HAP-1 (cell line): ENCODE measurements at regions of chr5 and their contacts with region 1.

Region 1: DNA sequence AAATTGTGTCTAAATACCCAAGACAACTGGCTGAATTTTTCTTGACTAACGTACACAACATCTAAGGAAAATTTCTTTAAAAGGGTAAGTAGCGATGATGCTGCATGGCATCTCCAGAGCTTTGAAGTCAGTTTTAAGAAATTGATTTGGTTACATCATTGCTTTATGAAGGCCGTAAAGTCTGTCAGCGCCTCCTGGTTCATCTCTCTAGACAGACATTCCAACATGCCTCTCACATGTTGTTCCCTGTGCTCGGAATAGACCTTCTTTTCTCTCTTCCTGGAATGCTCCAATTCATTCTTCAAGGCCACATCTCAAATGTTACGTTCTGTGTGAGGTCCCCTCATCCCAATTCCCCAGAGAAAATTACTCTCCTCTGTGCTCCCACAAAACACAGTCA is 108.7 kb upstream of the SSBP2 start:
- DNase-seq: no peak
- H3K4me3 ChIP-seq: no peak overlapping the region
- H3K4me1 ChIP-seq: no peaks in the 10 kb centered on the region
- H3K27me3 ChIP-seq: no peaks in the 10 kb centered on the region

Region 2: GRCh38 chr5:82234883-82235282 is 375.3 kb after region 1 on chr5:
- in situ Hi-C with region 1: loop called (anchors 10 kb)
- DNase-seq: no peak
- H3K4me3 ChIP-seq: no peak overlapping the region
- H3K4me1 ChIP-seq: peaks cover 5% of the 10 kb centered on the region
- H3K27me3 ChIP-seq: no peaks in the 10 kb centered on the region